K562 (cell line): ENCODE measurements at regions of chr11 and their contacts with region 1.

Region 1: GRCh38 chr11:119057000-119057769 is at the start of gene HYOU1:
- DNase-seq: peak; percentile 94 to 99 (median 96)
- ATAC-seq: peak; percentile 93
- H3K4me3 ChIP-seq: peak within 1 kb of the TSS; percentile 98
- H3K27ac ChIP-seq: peak within 1 kb of the TSS; percentile 95
- H3K4me1 ChIP-seq: peaks cover 18 to 21% of the 10 kb centered on the region in 2 experiments; a peak in 3 of 5 replicates
- H3K27me3 ChIP-seq: no peaks in the 10 kb centered on the region
- CTCF ChIP-seq: peak; percentile 51 to 71 (median 54)
- EP300 ChIP-seq: no peak; the same call in 1 of the 2 replicates
- POLR2A ChIP-seq: peak; percentile 85
- RAD21 ChIP-seq: peak; percentile 13 to 27; a peak in 2 of 4 replicates
- polyA plus RNA-seq, gene HYOU1: 19.5 to 46.2 TPM

Region 2: GRCh38 chr11:118834427-118835028 is 222.7 kb before region 1 on chr11:
- CTCF ChIA-PET with region 1: no interaction called
- POLR2A ChIA-PET with region 1: no interaction called
- in situ Hi-C with region 1: no loop called
- intact Hi-C with region 1: no loop called
- DNase-seq: no peak
- ATAC-seq: peak; percentile 52; the same call in 2 of the 3 replicates
- H3K4me3 ChIP-seq: no peak overlapping the region
- H3K27ac ChIP-seq: no peak overlapping the region
- H3K4me1 ChIP-seq: no peaks in the 10 kb centered on the region; a peak in 1 of 5 replicates
- H3K27me3 ChIP-seq: no peaks in the 10 kb centered on the region
- CTCF ChIP-seq: no peak
- EP300 ChIP-seq: no peak
- POLR2A ChIP-seq: no peak
- RAD21 ChIP-seq: no peak

Region 3: DNA sequence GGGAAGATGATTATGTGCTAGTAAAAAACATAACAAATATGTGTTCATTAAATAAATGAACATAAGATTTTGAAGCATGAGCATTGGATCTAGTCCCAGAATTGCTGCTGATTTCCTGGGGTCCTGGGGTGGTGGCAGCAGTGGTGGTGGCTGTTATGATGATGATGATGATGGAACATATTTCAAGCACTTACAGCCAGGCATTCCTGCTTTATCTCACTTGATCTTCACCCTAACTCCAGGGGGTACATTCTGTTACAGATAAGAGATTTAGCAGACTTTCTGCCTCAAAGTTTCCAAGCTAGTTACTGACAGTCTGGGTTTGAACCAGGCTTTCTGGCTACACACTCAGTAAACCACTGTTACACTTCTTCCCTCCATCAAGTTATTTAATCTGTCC is 33.4 kb before region 1 on chr11:
- CTCF ChIA-PET with region 1: no interaction called
- POLR2A ChIA-PET with region 1: interaction called, 14 read pairs
- in situ Hi-C with region 1: no loop called
- intact Hi-C with region 1: loop called (anchors 2 kb)
- DNase-seq: peak in 2 of 4 experiments; percentile 13 to 36
- ATAC-seq: no peak
- H3K4me3 ChIP-seq: no peak overlapping the region
- H3K27ac ChIP-seq: no peak overlapping the region; the same call in 2 of the 3 replicates
- H3K4me1 ChIP-seq: peaks cover 37 to 42% of the 10 kb centered on the region in 2 experiments
- H3K27me3 ChIP-seq: no peaks in the 10 kb centered on the region
- CTCF ChIP-seq: no peak
- EP300 ChIP-seq: no peak
- POLR2A ChIP-seq: no peak
- RAD21 ChIP-seq: no peak

Region 4: GRCh38 chr11:119044708-119045107 is 12.5 kb before region 1 on chr11:
- CTCF ChIA-PET with region 1: no interaction called
- POLR2A ChIA-PET with region 1: interaction called, 132 read pairs
- in situ Hi-C with region 1: no loop called
- intact Hi-C with region 1: no loop called
- DNase-seq: peak in 2 of 4 experiments; percentile 31 to 33
- ATAC-seq: peak; percentile 29
- H3K4me3 ChIP-seq: no peak overlapping the region
- H3K27ac ChIP-seq: no peak overlapping the region
- H3K4me1 ChIP-seq: peaks cover 4 to 6% of the 10 kb centered on the region in 2 experiments; a peak in 2 of 5 replicates
- H3K27me3 ChIP-seq: no peaks in the 10 kb centered on the region
- CTCF ChIP-seq: peak in 2 of 3 experiments; percentile 24 to 58; a peak in 4 of 6 replicates
- EP300 ChIP-seq: no peak
- POLR2A ChIP-seq: peak; percentile 37; the same call in 1 of the 2 replicates
- RAD21 ChIP-seq: no peak

Region 5: DNA sequence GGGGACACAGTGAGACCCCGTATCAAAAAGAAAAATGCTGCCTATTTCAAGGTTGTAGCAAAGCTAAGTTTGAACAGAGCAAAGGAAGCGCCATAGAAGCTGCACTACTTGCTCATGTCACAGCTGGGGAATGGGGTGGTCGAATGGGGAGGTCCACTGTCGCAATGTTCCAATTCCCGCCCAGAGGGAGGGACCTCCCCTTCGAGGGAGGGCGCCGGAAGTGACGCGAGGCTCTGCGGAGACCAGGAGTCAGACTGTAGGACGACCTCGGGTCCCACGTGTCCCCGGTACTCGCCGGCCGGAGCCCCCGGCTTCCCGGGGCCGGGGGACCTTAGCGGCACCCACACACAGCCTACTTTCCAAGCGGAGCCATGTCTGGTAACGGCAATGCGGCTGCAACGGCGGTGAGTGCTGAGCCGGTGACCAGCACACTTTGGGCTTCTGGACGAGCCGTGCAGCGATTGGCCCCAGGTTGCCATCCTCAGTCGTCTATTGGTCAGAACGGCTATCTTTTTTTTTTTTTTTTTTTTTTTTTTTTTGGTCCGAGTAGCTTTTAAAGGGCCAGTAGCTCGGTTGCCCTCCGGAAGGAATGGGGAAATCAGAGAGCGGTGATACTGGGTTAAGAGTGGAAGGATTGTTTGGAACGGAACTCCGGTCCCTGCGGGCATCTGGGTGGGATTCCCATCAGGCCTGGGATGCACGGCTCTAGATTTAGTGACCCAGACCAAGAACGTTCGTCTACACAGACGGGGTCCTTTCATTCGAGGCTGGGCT is 27.7 kb after region 1 on chr11 and contains the start of gene HMBS:
- CTCF ChIA-PET with region 1: interaction called, 3 read pairs
- POLR2A ChIA-PET with region 1: interaction called, 24 read pairs
- in situ Hi-C with region 1: no loop called
- intact Hi-C with region 1: no loop called
- DNase-seq: peak; percentile 86 to 98 (median 88)
- ATAC-seq: peak; percentile 82
- H3K4me3 ChIP-seq: peak within 1 kb of the TSS; percentile 79
- H3K27ac ChIP-seq: peak within 1 kb of the TSS; percentile 99
- H3K4me1 ChIP-seq: peaks cover 25 to 42% of the 10 kb centered on the region in 2 experiments; a peak in 4 of 5 replicates
- H3K27me3 ChIP-seq: no peaks in the 10 kb centered on the region
- CTCF ChIP-seq: no peak
- EP300 ChIP-seq: no peak
- POLR2A ChIP-seq: peak; percentile 92
- RAD21 ChIP-seq: 0 out of 4 replicates have a peak, but pooled peaks of 1 of the 2 experiments have one; percentile 6
- polyA plus RNA-seq, gene HMBS: 308 to 385 TPM